ENCODE measurements at regions of chr7 and their contacts with region 1.

Region 1: GRCh38 chr7:50467817-50468610 is 17.9 kb upstream of the FIGNL1 start:
- DNase-seq: peak; percentile 58
- ATAC-seq: peak; percentile 94
- H3K4me3 ChIP-seq: peak overlapping the region in 1 of 2 experiments; percentile 43; a peak in 2 of 4 replicates
- H3K27ac ChIP-seq: no peak overlapping the region
- H3K4me1 ChIP-seq: no peaks in the 10 kb centered on the region
- H3K27me3 ChIP-seq: no peaks in the 10 kb centered on the region
- CTCF ChIP-seq: peak; percentile 97

Region 2: DNA sequence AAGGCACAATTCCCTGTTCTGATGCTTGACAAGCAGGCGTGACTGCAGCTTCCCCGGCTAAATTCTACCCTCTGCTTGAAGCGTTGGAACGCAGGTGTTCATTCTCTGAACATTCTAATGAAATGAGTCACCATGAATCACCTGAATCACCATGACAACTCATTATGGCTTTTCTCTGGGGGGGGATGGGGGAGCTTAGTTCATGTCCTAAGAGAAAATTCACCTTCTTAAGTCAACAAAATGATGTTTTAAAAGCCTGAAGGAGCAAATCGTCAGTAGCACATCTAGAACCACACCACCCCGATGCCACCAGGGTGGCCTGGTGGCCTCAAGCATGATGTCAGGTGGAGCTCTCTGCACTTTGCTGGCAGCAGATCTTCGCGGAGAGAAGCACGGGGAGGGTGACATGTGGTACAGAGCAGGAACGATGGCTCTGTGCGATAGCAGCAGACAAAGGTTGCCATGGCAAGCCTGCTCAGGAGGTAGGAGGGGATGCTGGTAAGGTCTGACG is 63.4 kb after region 1 on chr7:
- CTCF ChIA-PET with region 1: interaction called, 11 read pairs
- POLR2A ChIA-PET with region 1: no interaction called
- in situ Hi-C with region 1: no loop called
- intact Hi-C with region 1: no loop called
- DNase-seq: peak; percentile 67
- ATAC-seq: peak; percentile 44
- H3K4me3 ChIP-seq: no peak overlapping the region
- H3K27ac ChIP-seq: no peak overlapping the region
- H3K4me1 ChIP-seq: 0 out of 2 replicates have a peak, but pooled peaks cover 7% of the 10 kb centered on the region
- H3K27me3 ChIP-seq: no peaks in the 10 kb centered on the region
- CTCF ChIP-seq: no peak

Region 3: GRCh38 chr7:50679218-50680007 is 211.4 kb after region 1 on chr7:
- CTCF ChIA-PET with region 1: interaction called, 8 read pairs
- POLR2A ChIA-PET with region 1: no interaction called
- in situ Hi-C with region 1: no loop called
- intact Hi-C with region 1: loop called (anchors 1 kb)
- DNase-seq: peak; percentile 12
- ATAC-seq: peak; percentile 84; the same call in 1 of the 2 replicates
- H3K4me3 ChIP-seq: no peak overlapping the region
- H3K27ac ChIP-seq: no peak overlapping the region
- H3K4me1 ChIP-seq: no peaks in the 10 kb centered on the region
- H3K27me3 ChIP-seq: no peaks in the 10 kb centered on the region
- CTCF ChIP-seq: no peak; the same call in 1 of the 2 replicates

Region 4: DNA sequence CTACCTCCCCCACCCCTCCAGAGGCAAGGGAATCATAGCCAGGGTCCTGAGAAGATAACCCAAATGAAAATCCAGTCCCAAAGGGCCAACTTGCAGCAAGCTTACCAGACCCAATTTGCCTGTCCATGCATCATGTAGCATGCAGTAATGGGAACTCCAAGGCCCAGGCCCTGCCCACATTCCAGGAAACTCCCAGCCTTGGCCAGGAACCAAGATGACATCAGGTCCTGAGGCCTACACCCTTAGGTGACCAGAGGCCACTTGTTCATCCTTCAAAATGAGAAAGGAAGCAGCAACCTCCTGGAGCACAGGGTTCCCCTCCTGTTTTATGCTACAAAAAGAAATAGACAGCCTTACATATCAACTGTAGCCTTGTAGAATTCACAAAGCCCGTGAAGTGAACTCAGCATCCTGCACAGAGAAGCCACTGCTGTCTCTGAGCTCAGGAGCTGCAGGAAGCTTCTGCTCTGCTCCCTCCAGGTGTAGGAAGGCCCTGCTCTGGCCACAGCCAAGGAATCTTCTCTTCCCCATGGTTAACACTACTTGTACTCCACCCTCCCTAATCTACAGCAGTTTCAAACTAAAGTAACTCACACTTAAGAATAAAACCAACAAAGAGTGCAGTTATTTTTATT is 344.9 kb after region 1 on chr7:
- CTCF ChIA-PET with region 1: no interaction called
- POLR2A ChIA-PET with region 1: no interaction called
- in situ Hi-C with region 1: no loop called
- intact Hi-C with region 1: no loop called
- DNase-seq: peak; percentile 81
- ATAC-seq: no peak
- H3K4me3 ChIP-seq: no peak overlapping the region
- H3K27ac ChIP-seq: no peak overlapping the region
- H3K4me1 ChIP-seq: no peaks in the 10 kb centered on the region
- H3K27me3 ChIP-seq: no peaks in the 10 kb centered on the region
- CTCF ChIP-seq: no peak

Measured in Panc1 (cell line).